Naive thymus-derived CD4-positive, alpha-beta T cell (primary cell): ENCODE measurements at regions of chr2 and their contacts with region 1.

Region 1: GRCh38 chr2:63588385-63589147 is at the starts of genes MDH1 and WDPCP:
- DNase-seq: peak; percentile 74 to 99 (median 96)
- ATAC-seq: peak; percentile 89
- H3K4me3 ChIP-seq: peak within 1 kb of the TSS; percentile 91
- H3K4me3 Mint-ChIP-seq: peak within 1 kb of the TSS; percentile 89 to 99 (median 94)
- H3K27ac ChIP-seq: peak within 1 kb of the TSS; percentile 89
- H3K27ac Mint-ChIP-seq: peak within 1 kb of the TSS; percentile 89 to 99 (median 95)
- H3K4me1 ChIP-seq: peaks cover 16 to 23% of the 10 kb centered on the region in 2 donors
- H3K4me1 Mint-ChIP-seq: peaks cover 24 to 63% (median 45%) of the 10 kb centered on the region in 7 donors
- H3K27me3 ChIP-seq: no peaks in the 10 kb centered on the region
- H3K27me3 Mint-ChIP-seq: no peaks in the 10 kb centered on the region
- total RNA-seq, gene MDH1: 76.5 to 180 (median 84.2) TPM
- total RNA-seq, gene WDPCP: 7.6 to 19.2 (median 16.1) TPM

Region 2: GRCh38 chr2:61854474-61855182 is 1733.9 kb before region 1 on chr2:
- CTCF ChIA-PET with region 1: no interaction called
- POLR2A ChIA-PET with region 1: interaction called, 3 read pairs
- intact Hi-C with region 1: loop called (anchors 1 kb)
- DNase-seq: peak; percentile 61 to 96 (median 94)
- ATAC-seq: peak; percentile 95
- H3K4me3 ChIP-seq: peak overlapping the region; percentile 100
- H3K4me3 Mint-ChIP-seq: peak overlapping the region; percentile 92 to 99 (median 96)
- H3K27ac ChIP-seq: peak overlapping the region; percentile 77
- H3K27ac Mint-ChIP-seq: peak overlapping the region; percentile 90 to 98 (median 95)
- H3K4me1 ChIP-seq: peaks cover 4 to 6% of the 10 kb centered on the region in 2 donors
- H3K4me1 Mint-ChIP-seq: peaks cover 10 to 27% (median 17%) of the 10 kb centered on the region in 7 donors
- H3K27me3 ChIP-seq: no peaks in the 10 kb centered on the region
- H3K27me3 Mint-ChIP-seq: no peaks in the 10 kb centered on the region

Region 3: DNA sequence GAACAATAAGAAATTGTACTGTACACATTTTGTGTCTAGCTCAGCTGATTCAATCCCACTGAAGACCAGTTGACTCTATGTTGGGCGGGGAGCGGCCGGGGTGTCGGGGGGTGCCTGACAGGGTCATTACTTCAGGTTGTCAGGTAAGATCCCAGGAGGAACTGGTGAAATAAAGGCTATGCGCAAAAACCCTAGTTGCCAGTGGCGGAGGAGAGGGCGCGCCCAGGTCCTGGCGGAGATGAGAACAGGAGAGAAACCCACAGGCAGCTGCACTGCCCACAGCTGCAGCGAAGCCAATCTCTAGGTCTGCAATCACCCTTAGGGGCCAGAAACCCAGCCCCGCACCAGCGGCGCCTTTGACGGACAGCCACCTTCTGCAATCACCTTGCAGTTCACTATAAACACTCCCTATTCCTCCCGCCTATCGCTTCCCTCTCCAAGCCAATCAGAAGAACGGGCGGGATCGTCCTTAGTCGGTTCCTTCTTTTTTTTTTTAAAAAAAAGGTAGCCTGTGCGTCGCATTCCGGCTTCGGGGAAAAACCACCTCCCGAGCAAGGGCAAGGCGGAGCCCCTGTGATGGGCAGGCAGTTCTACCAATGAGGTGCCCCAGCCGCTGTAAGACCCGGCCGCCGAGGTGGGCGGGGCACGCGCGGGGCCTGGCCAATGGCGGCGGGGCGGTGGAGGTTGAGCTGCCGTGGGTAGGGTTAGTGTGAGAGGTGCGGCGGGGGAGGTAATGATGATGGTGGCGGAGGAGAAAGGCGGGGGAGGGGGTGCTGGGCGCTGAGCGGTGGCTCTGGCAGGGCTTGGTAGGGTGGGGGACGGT is 883.3 kb before region 1 on chr2 and contains the start of gene EHBP1:
- CTCF ChIA-PET with region 1: interaction called, 3 read pairs
- POLR2A ChIA-PET with region 1: interaction called, 3 read pairs
- intact Hi-C with region 1: loop called (anchors 1 kb)
- DNase-seq: peak; percentile 95 to 99 (median 98)
- ATAC-seq: peak; percentile 98
- H3K4me3 ChIP-seq: peak within 1 kb of the TSS; percentile 82
- H3K4me3 Mint-ChIP-seq: peak within 1 kb of the TSS; percentile 83 to 98 (median 92)
- H3K27ac ChIP-seq: peak within 1 kb of the TSS; percentile 72
- H3K27ac Mint-ChIP-seq: peak within 1 kb of the TSS; percentile 76 to 93 (median 84)
- H3K4me1 ChIP-seq: peaks cover 0 to 25% of the 10 kb centered on the region in 2 donors
- H3K4me1 Mint-ChIP-seq: peaks cover 24 to 48% (median 31%) of the 10 kb centered on the region in 7 donors
- H3K27me3 ChIP-seq: no peaks in the 10 kb centered on the region
- H3K27me3 Mint-ChIP-seq: peaks cover 0 to 13% (median 0%) of the 10 kb centered on the region in 5 donors
- total RNA-seq, gene EHBP1: 23.8 to 31.5 (median 30.0) TPM

Region 4: GRCh38 chr2:63888490-63889402 is 300.2 kb after region 1 on chr2:
- CTCF ChIA-PET with region 1: no interaction called
- POLR2A ChIA-PET with region 1: no interaction called
- intact Hi-C with region 1: loop called in 1 of 2 experiments (anchors 2 kb)
- DNase-seq: peak in 8 of 9 donors; percentile 16 to 44 (median 32)
- ATAC-seq: peak; percentile 81
- H3K4me3 ChIP-seq: no peak overlapping the region
- H3K4me3 Mint-ChIP-seq: no peak overlapping the region
- H3K27ac ChIP-seq: no peak overlapping the region
- H3K27ac Mint-ChIP-seq: peak overlapping the region in 7 of 9 donors; percentile 9 to 71 (median 42)
- H3K4me1 ChIP-seq: no peaks in the 10 kb centered on the region
- H3K4me1 Mint-ChIP-seq: peaks cover 0 to 8% (median 0%) of the 10 kb centered on the region in 7 donors
- H3K27me3 ChIP-seq: no peaks in the 10 kb centered on the region
- H3K27me3 Mint-ChIP-seq: no peaks in the 10 kb centered on the region

Region 5: DNA sequence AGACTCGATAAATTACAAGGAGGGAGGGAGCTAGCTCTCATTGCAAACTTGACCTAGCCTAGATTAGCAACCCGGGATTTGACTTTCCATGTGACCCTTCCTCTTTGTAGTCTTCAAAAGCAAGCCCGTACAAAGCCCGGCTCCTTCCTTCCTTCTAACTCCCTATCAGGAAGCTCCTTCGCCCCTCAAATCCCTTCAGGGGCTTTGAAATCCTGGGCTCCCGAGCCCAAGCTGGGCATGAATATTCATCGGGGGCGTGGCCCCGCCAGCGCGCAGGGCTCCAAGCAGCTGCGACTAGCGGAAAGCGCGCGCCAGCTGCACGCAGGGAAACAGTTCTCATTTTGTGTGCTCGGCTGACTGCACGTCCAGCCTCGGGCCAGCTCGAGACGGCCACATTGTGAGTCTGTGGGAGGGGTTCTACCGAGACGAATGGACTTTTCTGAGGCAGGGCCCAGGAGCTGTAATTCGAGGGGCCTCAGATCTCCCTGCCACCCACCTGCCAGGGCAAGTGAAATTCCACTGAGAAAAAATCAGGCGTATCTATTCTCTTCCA is 639.6 kb after region 1 on chr2:
- CTCF ChIA-PET with region 1: no interaction called
- POLR2A ChIA-PET with region 1: no interaction called
- intact Hi-C with region 1: loop called in 1 of 2 experiments (anchors 10 kb)
- DNase-seq: peak in 8 of 9 donors; percentile 38 to 61 (median 57)
- ATAC-seq: peak; percentile 94
- H3K4me3 ChIP-seq: peak overlapping the region; percentile 48
- H3K4me3 Mint-ChIP-seq: peak overlapping the region; percentile 86 to 100 (median 95)
- H3K27ac ChIP-seq: peak overlapping the region; percentile 78
- H3K27ac Mint-ChIP-seq: peak overlapping the region; percentile 83 to 99 (median 95)
- H3K4me1 ChIP-seq: peaks cover 0 to 15% of the 10 kb centered on the region in 2 donors
- H3K4me1 Mint-ChIP-seq: peaks cover 16 to 45% (median 38%) of the 10 kb centered on the region in 7 donors
- H3K27me3 ChIP-seq: no peaks in the 10 kb centered on the region
- H3K27me3 Mint-ChIP-seq: no peaks in the 10 kb centered on the region

Region 6: GRCh38 chr2:65129826-65130663 is 1541.5 kb after region 1 on chr2 and contains the start of gene RAB1A:
- CTCF ChIA-PET with region 1: no interaction called
- POLR2A ChIA-PET with region 1: interaction called, 5 read pairs
- intact Hi-C with region 1: loop called in 1 of 2 experiments (anchors 1 kb)
- DNase-seq: peak; percentile 91 to 99 (median 98)
- ATAC-seq: peak; percentile 94
- H3K4me3 ChIP-seq: peak within 1 kb of the TSS; percentile 78
- H3K4me3 Mint-ChIP-seq: peak within 1 kb of the TSS; percentile 90 to 100 (median 98)
- H3K27ac ChIP-seq: peak within 1 kb of the TSS; percentile 98
- H3K27ac Mint-ChIP-seq: peak within 1 kb of the TSS; percentile 95 to 100 (median 99)
- H3K4me1 ChIP-seq: peaks cover 24 to 25% of the 10 kb centered on the region in 2 donors
- H3K4me1 Mint-ChIP-seq: peaks cover 24 to 47% (median 35%) of the 10 kb centered on the region in 7 donors
- H3K27me3 ChIP-seq: no peaks in the 10 kb centered on the region
- H3K27me3 Mint-ChIP-seq: peaks cover 0 to 17% (median 0%) of the 10 kb centered on the region in 5 donors
- total RNA-seq, gene RAB1A: 48.8 to 78.6 (median 65.8) TPM